ENCODE measurements at regions of chr1 and their contacts with region 1.

Region 1: GRCh38 chr1:26787706-26788514 is at the start of gene PIGV:
- DNase-seq: peak; percentile 76 to 78
- ATAC-seq: peak; percentile 87 to 88
- H3K4me3 ChIP-seq: peak within 1 kb of the TSS; percentile 68
- H3K27ac ChIP-seq: peak within 1 kb of the TSS; percentile 84 to 100
- H3K4me1 ChIP-seq: peaks cover 43% of the 10 kb centered on the region
- CTCF ChIP-seq: no peak
- EP300 ChIP-seq: no peak
- POLR2A ChIP-seq: peak; percentile 57
- RAD21 ChIP-seq: no peak
- polyA plus RNA-seq, gene PIGV: 16.2 and 21.7 TPM in 2 replicates

Region 2: GRCh38 chr1:26608895-26609294 is 179.0 kb before region 1 on chr1:
- CTCF ChIA-PET with region 1: interaction called, 215 read pairs
- POLR2A ChIA-PET with region 1: interaction called, 5 read pairs
- DNase-seq: no peak
- ATAC-seq: no peak
- H3K4me3 ChIP-seq: no peak overlapping the region
- H3K27ac ChIP-seq: no peak overlapping the region
- H3K4me1 ChIP-seq: no peaks in the 10 kb centered on the region
- CTCF ChIP-seq: no peak
- EP300 ChIP-seq: no peak
- POLR2A ChIP-seq: no peak
- RAD21 ChIP-seq: no peak

Region 3: GRCh38 chr1:26645734-26646133 is 142.2 kb before region 1 on chr1:
- CTCF ChIA-PET with region 1: interaction called, 11 read pairs
- POLR2A ChIA-PET with region 1: no interaction called
- DNase-seq: no peak
- ATAC-seq: no peak
- H3K4me3 ChIP-seq: no peak overlapping the region
- H3K27ac ChIP-seq: no peak overlapping the region
- H3K4me1 ChIP-seq: no peaks in the 10 kb centered on the region
- CTCF ChIP-seq: no peak
- EP300 ChIP-seq: no peak
- POLR2A ChIP-seq: no peak
- RAD21 ChIP-seq: no peak

Region 4: DNA sequence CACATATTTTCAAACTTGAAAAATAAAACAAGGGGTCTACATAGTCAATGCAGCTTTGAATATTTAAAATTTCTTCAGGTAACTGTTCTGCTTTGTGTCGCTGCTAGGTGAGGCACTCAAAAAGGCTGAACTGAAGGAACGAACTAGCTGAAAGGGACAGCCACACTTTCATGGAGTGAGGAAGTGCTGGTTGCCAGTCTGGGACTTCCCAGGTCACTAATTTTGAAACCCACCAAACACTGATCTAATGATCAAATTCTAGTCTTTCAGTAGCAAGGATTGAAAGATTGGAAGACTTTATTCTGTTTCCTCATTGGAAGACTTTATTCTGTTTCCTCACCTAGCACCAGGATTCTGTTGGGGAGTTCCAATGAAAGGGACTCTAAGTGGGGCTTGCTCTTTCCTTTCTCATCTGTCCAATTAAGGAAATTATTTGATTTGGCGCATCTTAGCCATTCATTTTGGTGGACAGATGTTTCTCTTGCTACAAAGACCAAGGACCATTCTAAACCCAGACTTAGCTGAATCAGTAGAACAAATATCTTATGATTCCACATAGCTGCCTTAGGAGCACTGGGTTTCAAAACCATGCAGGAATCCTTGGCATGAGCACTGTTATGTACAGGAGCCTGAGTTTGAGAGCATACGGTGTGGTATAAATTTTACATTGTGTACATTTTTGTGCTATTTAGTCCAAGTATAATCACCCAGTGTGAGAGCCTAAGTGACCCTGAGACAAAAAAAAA is 103.0 kb before region 1 on chr1:
- CTCF ChIA-PET with region 1: interaction called, 66 read pairs
- POLR2A ChIA-PET with region 1: no interaction called
- DNase-seq: no peak
- ATAC-seq: no peak
- H3K4me3 ChIP-seq: no peak overlapping the region
- H3K27ac ChIP-seq: no peak overlapping the region
- H3K4me1 ChIP-seq: peaks cover 7% of the 10 kb centered on the region; the same call in 1 of the 3 replicates
- CTCF ChIP-seq: no peak
- EP300 ChIP-seq: no peak
- POLR2A ChIP-seq: no peak
- RAD21 ChIP-seq: no peak

Region 5: DNA sequence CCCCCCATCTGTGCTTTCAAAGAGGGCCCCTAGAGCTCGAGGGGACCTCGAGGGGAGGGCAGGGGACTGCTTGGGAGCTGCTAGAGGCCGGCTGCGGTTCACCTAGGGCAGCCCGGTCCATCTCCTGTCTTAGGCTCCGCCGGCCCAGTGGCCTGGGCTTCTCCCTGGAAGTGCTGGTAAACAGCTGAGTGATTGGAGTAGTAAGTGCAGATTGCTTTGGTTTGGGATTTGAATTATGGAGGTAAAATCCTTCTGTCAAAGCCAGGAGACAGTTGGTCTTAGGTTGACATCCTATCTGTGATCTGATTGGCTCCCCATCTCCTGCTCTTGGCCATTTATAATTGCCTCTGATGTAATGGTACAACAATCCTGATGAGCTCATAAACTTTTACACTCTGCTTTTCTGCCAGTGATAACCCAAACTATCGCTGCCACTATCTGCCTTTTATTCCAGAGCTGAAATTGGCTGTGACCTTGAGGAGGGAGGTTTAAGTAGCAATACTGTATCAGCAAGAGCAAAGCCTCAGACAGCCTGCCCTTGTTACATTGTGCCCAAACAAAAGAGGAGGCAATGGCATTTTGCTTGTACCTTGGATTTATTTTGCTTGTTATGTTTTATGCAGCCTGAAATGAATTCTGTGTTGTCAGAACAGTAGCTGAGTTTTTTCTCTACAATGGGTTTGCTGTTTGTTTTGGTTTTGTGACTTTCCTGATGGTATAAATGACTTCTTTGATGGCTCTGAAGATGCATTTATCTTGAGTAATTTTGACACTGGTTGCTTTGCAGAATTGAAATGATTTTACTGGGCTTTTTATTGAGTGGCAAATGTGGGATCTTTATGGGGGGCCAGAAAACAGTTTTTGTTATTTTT is 89.7 kb before region 1 on chr1:
- CTCF ChIA-PET with region 1: interaction called, 35 read pairs
- POLR2A ChIA-PET with region 1: interaction called, 28 read pairs
- DNase-seq: peak; percentile 58 to 83
- ATAC-seq: peak; percentile 58 to 68
- H3K4me3 ChIP-seq: peak overlapping the region; percentile 91
- H3K27ac ChIP-seq: peak overlapping the region; percentile 100
- H3K4me1 ChIP-seq: peaks cover 66% of the 10 kb centered on the region
- CTCF ChIP-seq: no peak
- EP300 ChIP-seq: no peak
- POLR2A ChIP-seq: no peak
- RAD21 ChIP-seq: no peak

Region 6: DNA sequence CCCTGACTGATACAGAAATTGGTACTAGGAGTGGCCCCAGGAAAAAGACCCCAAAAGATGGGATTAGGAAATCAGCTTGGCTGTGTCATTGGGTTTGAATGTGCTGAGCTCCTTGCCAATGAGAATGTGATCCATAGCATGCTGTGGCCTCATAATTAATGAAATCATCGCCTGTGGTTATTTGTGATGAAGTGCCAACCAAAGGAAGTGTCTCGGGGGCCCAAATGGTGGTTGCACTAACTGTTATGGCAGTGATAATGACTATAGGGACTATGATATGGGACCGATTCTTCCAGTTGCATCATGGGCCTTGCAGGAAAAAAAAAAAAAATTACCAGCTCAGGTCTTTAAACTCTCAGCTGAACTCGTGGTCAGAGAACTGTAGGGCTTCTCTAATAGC is 23.1 kb after region 1 on chr1:
- CTCF ChIA-PET with region 1: interaction called, 26 read pairs
- POLR2A ChIA-PET with region 1: no interaction called
- DNase-seq: no peak
- ATAC-seq: no peak
- H3K4me3 ChIP-seq: no peak overlapping the region
- H3K27ac ChIP-seq: no peak overlapping the region; a peak in 1 of 6 replicates
- H3K4me1 ChIP-seq: no peaks in the 10 kb centered on the region; the same call in 2 of the 3 replicates
- CTCF ChIP-seq: no peak
- EP300 ChIP-seq: no peak
- POLR2A ChIP-seq: no peak
- RAD21 ChIP-seq: no peak

Measured in A549 (cell line).